ENCODE measurements at regions of chr3 and their contacts with region 1.

Region 1: DNA sequence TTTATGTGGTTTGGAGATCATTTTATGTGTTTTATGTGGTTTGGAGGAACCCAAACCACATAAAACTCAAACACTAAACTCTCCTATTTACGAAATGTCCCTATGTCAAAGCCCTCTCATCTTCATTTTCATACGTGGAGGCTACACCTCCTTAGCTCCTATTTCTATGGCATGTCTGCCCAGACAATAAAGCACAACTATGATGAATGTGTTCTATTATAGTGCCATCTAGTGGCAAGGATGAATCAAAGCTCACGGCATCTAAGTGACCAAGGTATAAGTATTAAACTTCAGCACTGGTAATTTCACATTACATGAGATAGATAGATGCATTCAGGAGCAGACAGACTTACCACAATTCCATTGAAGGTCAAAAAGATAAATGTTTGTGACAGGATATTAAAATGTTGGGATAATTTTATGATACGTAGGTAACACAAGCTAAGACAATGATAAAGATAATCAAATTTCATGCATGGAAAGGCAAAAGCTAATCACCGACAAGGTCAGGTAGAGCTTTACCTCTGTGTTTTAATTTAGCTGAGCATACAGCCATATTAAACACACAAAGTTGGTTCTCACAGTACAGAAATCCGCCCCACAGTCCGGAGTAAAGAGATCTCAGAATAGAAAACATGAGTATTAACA is 130.6 kb upstream of the FHIT start:
- DNase-seq: no peak
- ATAC-seq: peak; percentile 49
- H3K4me3 Mint-ChIP-seq: no peak overlapping the region
- H3K27ac Mint-ChIP-seq: no peak overlapping the region
- H3K4me1 Mint-ChIP-seq: no peaks in the 10 kb centered on the region
- H3K27me3 Mint-ChIP-seq: peaks cover 8% of the 10 kb centered on the region
- CTCF ChIP-seq: no peak

Region 2: DNA sequence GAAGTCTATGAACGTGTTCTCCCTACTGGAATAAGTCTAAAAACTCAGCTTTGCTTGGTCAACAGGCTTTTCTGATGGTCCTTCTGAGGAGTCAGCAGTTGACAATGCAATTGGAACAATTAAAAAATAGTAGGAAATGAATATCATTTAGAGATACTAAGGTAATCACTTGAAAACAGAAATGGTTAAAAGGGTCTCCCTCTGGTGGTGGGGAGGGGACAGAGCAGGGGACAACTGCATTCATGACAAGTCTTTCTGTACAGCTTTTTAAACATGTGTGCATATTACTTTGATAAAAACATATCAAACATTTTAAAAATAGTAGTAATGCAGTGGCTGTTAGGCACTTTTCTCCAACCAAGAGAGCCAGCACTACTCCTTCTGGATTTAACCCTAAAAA is 10.7 kb before region 1 on chr3:
- CTCF ChIA-PET with region 1: interaction called, 13 read pairs
- POLR2A ChIA-PET with region 1: no interaction called
- intact Hi-C with region 1: no loop called
- DNase-seq: no peak
- ATAC-seq: no peak
- H3K4me3 Mint-ChIP-seq: no peak overlapping the region
- H3K27ac Mint-ChIP-seq: no peak overlapping the region
- H3K4me1 Mint-ChIP-seq: no peaks in the 10 kb centered on the region
- H3K27me3 Mint-ChIP-seq: no peaks in the 10 kb centered on the region
- CTCF ChIP-seq: no peak

Region 3: GRCh38 chr3:62188681-62189383 is 807.0 kb after region 1 on chr3:
- CTCF ChIA-PET with region 1: no interaction called
- POLR2A ChIA-PET with region 1: no interaction called
- intact Hi-C with region 1: loop called (anchors 5 kb)
- DNase-seq: peak; percentile 27
- ATAC-seq: no peak
- H3K4me3 Mint-ChIP-seq: no peak overlapping the region
- H3K27ac Mint-ChIP-seq: no peak overlapping the region
- H3K4me1 Mint-ChIP-seq: peaks cover 7% of the 10 kb centered on the region
- H3K27me3 Mint-ChIP-seq: no peaks in the 10 kb centered on the region
- CTCF ChIP-seq: no peak

Measured in activated B cell treated with CpG ODN at 0.5 μM for 24 hours (primary cell).